WTC11 (cell line): ENCODE measurements at regions of chrX and their contacts with region 1.

Region 1: GRCh38 chrX:110853610-110854009 is 58.0 kb upstream of the CHRDL1 start:
- DNase-seq: peak; percentile 21
- ATAC-seq: peak; percentile 89
- H3K4me3 Mint-ChIP-seq: no peak overlapping the region
- H3K27ac Mint-ChIP-seq: no peak overlapping the region
- H3K4me1 Mint-ChIP-seq: peaks cover 3% of the 10 kb centered on the region; the same call in 1 of the 2 replicates
- H3K27me3 Mint-ChIP-seq: no peaks in the 10 kb centered on the region
- CTCF ChIP-seq: peak; percentile 17; the same call in 1 of the 2 replicates

Region 2: DNA sequence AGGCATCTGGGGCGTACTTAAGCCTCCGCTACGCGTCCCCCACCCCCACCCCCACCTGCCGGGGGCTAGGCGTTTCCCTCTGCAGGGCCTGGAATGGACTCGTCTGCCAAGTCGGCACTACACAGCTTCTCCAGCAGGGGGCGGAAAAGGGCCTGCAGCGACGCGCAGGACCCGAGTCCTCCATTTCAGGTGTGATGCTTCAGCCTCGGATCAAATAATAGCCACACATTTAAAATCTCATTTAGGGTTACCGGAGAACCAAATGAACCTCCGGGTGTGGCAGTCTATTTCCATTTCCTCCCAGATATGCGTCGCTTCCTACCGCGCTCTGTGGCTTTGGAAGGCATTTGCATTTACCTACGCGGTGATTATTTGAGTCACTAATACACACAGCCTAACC is 245.3 kb after region 1 on chrX:
- CTCF ChIA-PET with region 1: interaction called, 41 read pairs
- POLR2A ChIA-PET with region 1: no interaction called
- DNase-seq: peak; percentile 79
- ATAC-seq: peak; percentile 44
- H3K4me3 Mint-ChIP-seq: no peak overlapping the region
- H3K27ac Mint-ChIP-seq: no peak overlapping the region
- H3K4me1 Mint-ChIP-seq: peaks cover 26% of the 10 kb centered on the region
- H3K27me3 Mint-ChIP-seq: no peaks in the 10 kb centered on the region; the same call in 1 of the 2 replicates
- CTCF ChIP-seq: peak; percentile 67; the same call in 1 of the 2 replicates